PC-3 (cell line): ENCODE measurements at regions of chr18 and their contacts with region 1.

Region 1: GRCh38 chr18:54119524-54120019 is 104.9 kb downstream of the MBD2 start:
- DNase-seq: peak; percentile 79
- ATAC-seq: peak; percentile 94
- H3K4me3 ChIP-seq: peak overlapping the region; percentile 42; the same call in 1 of the 2 replicates
- H3K27ac ChIP-seq: no peak overlapping the region
- H3K4me1 ChIP-seq: no peaks in the 10 kb centered on the region
- H3K27me3 ChIP-seq: no peaks in the 10 kb centered on the region; the same call in 1 of the 2 replicates
- CTCF ChIP-seq: peak; percentile 95

Region 2: DNA sequence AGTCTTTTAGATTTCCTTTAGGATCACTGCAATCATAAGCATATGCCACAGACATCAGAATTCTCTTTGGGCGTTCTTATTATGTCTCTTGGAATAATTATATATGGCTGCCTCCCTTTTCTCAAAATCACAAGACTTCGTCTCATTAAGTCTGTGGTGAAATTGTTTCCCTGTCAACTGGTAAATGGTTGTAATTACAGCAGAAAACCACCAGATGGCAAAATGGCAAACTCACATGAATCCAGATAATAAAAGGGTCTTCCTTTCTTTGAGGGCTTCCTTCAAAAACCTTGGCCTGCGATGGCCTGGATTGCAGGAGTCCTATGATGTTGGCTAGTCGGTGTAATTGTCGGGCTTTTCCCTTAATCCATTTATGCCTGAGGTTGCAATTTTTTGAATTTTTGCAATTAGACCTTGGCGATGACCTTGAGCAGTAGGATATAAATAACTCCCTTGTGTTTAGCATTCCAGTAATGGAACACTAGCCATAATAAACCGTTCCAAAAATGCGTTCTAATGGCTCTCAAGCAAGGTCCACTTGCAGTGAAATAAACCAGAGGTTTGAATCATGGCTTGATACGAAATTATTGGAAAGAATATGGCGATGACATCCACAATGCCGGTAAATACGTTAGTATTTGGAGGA is 551.5 kb before region 1 on chr18:
- CTCF ChIA-PET with region 1: interaction called, 3 read pairs
- POLR2A ChIA-PET with region 1: no interaction called
- intact Hi-C with region 1: loop called (anchors 1 kb)
- DNase-seq: peak; percentile 43
- ATAC-seq: no peak
- H3K4me3 ChIP-seq: no peak overlapping the region
- H3K27ac ChIP-seq: no peak overlapping the region
- H3K4me1 ChIP-seq: no peaks in the 10 kb centered on the region
- H3K27me3 ChIP-seq: peaks cover 14% of the 10 kb centered on the region
- CTCF ChIP-seq: peak; percentile 67

Region 3: DNA sequence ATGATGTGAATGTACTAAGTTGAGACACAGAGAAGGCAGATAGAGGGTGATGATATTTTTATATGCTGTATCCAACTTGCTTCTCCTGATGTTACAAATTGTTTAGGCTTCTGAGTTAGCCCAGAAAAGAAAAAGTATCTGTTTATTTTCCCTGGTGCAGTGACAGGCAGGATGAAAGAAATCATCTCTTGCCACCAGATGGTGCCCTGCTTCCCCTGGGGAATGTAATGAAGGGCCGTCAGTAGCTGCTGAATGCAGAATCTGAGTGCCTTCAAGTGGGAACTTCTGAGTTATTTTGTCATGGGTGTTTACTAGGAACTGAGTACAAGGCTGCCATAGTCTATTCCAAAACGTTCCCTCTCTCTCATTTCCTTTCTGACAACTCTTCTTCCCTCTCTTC is 420.7 kb before region 1 on chr18:
- CTCF ChIA-PET with region 1: interaction called, 15 read pairs
- POLR2A ChIA-PET with region 1: no interaction called
- intact Hi-C with region 1: loop called (anchors 1 kb)
- DNase-seq: peak; percentile 60
- ATAC-seq: peak; percentile 84
- H3K4me3 ChIP-seq: no peak overlapping the region
- H3K27ac ChIP-seq: no peak overlapping the region
- H3K4me1 ChIP-seq: no peaks in the 10 kb centered on the region
- H3K27me3 ChIP-seq: peaks cover 27% of the 10 kb centered on the region
- CTCF ChIP-seq: peak; percentile 85

Region 4: DNA sequence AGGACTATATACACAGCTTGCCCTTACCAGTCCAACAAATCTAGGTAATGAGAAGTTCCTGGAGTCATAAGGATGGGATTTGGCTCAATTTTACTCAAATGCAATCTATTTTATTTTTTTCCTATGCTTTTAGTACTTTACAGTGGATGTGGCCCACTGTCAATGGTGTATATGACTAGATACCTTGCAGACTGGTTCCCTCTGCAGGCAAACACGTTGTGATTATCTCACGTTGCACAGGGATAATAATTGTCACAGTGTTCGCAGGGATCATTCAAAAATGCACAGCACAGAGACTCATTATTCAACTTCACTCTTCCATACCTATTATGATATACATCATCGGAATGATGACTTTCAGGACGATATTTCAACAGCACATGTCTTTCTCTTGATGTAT is 254.8 kb before region 1 on chr18:
- CTCF ChIA-PET with region 1: no interaction called
- POLR2A ChIA-PET with region 1: no interaction called
- intact Hi-C with region 1: loop called (anchors 2 kb)
- DNase-seq: peak; percentile 51
- ATAC-seq: peak; percentile 76
- H3K4me3 ChIP-seq: no peak overlapping the region
- H3K27ac ChIP-seq: no peak overlapping the region
- H3K4me1 ChIP-seq: no peaks in the 10 kb centered on the region
- H3K27me3 ChIP-seq: peaks cover 23% of the 10 kb centered on the region
- CTCF ChIP-seq: peak; percentile 54

Region 5: DNA sequence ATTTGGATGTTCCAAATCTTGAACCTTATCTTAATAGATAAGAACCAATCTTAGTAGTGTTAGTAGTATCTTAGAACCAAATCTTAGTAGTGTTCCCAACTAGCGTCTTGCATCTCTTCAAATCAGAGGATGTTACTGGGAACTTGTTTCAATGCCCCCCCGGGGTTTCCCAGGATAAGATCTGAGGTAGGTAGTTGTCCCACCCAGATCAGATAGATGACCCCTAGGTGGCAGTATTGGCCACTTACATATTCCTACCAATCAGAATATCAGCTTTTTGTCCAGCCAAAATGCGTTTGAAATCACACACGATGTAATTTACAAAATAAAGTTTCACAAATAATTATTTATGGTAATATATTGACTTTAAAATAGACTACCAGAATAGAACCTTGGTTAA is 209.9 kb before region 1 on chr18:
- CTCF ChIA-PET with region 1: interaction called, 3 read pairs
- POLR2A ChIA-PET with region 1: no interaction called
- intact Hi-C with region 1: loop called (anchors 1 kb)
- DNase-seq: peak; percentile 70
- ATAC-seq: peak; percentile 60; the same call in 1 of the 2 replicates
- H3K4me3 ChIP-seq: no peak overlapping the region
- H3K27ac ChIP-seq: no peak overlapping the region
- H3K4me1 ChIP-seq: no peaks in the 10 kb centered on the region
- H3K27me3 ChIP-seq: peaks cover 13% of the 10 kb centered on the region; the same call in 1 of the 2 replicates
- CTCF ChIP-seq: peak; percentile 86

Region 6: DNA sequence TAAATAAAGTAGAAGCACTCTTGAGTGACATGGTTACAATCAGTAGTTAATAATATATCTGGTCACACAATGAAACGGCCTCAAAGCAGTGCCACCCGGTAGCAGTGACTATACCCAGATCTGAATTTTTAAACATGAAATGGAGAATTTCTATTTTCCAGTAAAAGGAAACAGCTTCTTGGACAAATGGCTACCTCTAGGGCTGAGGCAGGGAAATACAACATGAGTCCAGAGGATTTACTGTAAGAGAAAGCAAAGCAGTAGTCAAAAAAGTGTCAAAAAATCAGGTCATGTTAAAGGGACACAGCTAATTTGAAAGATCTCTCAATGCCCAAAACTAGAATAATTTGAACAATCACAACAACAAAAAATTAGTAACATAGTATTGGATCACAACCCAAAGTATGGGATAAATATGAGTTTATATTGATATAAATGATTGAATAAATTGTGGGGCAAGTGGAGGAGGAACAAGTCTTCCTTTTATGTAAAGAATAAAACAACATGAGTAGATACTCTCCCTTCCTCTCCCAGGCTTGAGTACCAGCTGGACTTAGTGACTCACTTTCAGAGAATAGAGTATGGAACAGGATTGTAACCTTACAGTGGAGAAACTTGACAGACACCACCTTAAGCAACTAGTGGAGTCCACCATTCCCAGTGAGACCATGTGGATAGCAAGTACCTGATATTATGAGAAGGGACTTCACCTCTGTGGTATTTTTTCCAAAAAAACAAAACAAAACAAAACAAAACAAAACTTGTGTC is 75.9 kb before region 1 on chr18:
- CTCF ChIA-PET with region 1: no interaction called
- POLR2A ChIA-PET with region 1: no interaction called
- intact Hi-C with region 1: loop called (anchors 5 kb)
- DNase-seq: peak; percentile 36
- ATAC-seq: peak; percentile 31; the same call in 1 of the 2 replicates
- H3K4me3 ChIP-seq: no peak overlapping the region
- H3K27ac ChIP-seq: no peak overlapping the region
- H3K4me1 ChIP-seq: no peaks in the 10 kb centered on the region
- H3K27me3 ChIP-seq: no peaks in the 10 kb centered on the region
- CTCF ChIP-seq: peak; percentile 59